Posterior vena cava (tissue), 2 donors: ENCODE measurements at regions of chr14 and their contacts with region 1.

Region 1: GRCh38 chr14:45587142-45587541 is 334.1 kb upstream of the MIS18BP1 start:
- DNase-seq: no peak

Region 2: DNA sequence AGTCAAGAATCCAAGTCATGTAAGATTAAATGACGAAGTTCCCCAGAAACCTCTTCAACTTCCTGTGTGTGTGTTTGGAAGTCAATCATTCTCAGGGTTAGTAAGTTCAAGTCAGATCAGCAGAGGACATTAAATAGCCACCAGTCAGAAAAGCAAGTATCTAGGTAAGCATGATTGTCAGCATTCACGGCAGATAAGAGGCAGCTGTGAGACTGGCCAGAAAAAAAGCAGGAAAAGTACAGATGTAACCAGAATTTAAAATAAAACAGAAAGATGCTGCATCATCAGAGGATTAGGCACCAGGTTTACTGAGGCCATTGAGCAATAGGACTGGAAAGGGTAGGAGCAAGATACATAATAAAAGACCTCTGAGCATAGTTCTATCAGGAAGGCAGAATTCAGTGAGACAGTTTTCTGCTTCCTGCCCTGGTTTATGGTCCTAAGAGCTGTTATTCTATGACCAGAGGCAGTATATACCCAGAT is 1686.9 kb before region 1 on chr14:
- intact Hi-C with region 1: loop called in 1 of 2 experiments (anchors 10 kb)
- DNase-seq: no peak

Region 3: DNA sequence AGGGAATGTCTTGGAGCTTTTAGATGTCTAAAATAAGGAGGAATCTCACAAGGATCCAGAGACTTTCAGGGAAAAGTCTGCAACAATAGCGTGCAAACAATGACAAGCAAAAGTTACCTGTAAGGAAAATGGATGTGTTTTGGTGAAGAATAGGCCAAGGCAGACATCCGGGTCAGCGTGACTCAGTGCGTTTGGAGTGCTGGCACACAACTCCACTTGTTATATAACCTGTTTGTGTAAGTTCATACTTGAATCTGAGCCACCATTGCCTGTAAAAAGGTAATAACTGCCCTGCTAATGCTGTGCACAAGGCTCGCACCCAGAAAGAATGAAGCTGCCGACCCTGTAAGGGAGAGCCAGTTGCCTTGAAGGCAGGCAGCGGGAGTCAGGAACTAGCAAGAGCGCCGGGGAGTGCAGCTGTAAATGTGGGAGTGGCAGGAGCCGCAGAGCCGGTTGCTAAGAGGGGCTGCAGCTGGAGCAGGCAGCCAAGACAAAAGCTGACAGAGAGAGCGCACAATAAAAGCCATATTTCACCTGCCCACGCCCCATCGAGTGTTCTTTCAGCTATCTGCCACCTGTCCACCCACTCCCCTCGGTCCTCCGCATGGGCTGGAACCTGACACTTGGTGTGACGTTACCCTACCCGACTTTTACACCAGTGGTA is 304.4 kb after region 1 on chr14:
- intact Hi-C with region 1: loop called in 1 of 2 experiments (anchors 10 kb)
- DNase-seq: no peak

Region 4: GRCh38 chr14:45949479-45949878 is 362.3 kb after region 1 on chr14:
- intact Hi-C with region 1: no loop called
- DNase-seq: no peak